Activated T-helper 1 cell treated with anti-CD3 and anti-CD28 coated beads, Interleukin-12 subunit alpha, Interleukin-12 subunit beta, Interleukin-2, Interleukin-4 antibody, amounts not matched to agents 30 ng/mL and 10 ng/mL and 1 ng/mL, durations not matched to agents 14 hours and 24 hours and 36 hours (primary cell): ENCODE measurements at regions of chr2 and their contacts with region 1.

Region 1: GRCh38 chr2:8544786-8545694 is 136.8 kb upstream of the ID2 start:
- DNase-seq: peak; percentile 83
- H3K4me3 Mint-ChIP-seq: peak overlapping the region; percentile 59
- H3K27ac Mint-ChIP-seq: peak overlapping the region; percentile 99
- H3K4me1 Mint-ChIP-seq: peaks cover 80% of the 10 kb centered on the region
- H3K27me3 Mint-ChIP-seq: no peaks in the 10 kb centered on the region

Region 2: GRCh38 chr2:7437716-7438632 is 1107.1 kb before region 1 on chr2:
- intact Hi-C with region 1: loop called (anchors 1 kb)
- DNase-seq: no peak
- H3K4me3 Mint-ChIP-seq: peak overlapping the region; percentile 54
- H3K27ac Mint-ChIP-seq: peak overlapping the region; percentile 88
- H3K4me1 Mint-ChIP-seq: peaks cover 86% of the 10 kb centered on the region
- H3K27me3 Mint-ChIP-seq: no peaks in the 10 kb centered on the region

Region 3: DNA sequence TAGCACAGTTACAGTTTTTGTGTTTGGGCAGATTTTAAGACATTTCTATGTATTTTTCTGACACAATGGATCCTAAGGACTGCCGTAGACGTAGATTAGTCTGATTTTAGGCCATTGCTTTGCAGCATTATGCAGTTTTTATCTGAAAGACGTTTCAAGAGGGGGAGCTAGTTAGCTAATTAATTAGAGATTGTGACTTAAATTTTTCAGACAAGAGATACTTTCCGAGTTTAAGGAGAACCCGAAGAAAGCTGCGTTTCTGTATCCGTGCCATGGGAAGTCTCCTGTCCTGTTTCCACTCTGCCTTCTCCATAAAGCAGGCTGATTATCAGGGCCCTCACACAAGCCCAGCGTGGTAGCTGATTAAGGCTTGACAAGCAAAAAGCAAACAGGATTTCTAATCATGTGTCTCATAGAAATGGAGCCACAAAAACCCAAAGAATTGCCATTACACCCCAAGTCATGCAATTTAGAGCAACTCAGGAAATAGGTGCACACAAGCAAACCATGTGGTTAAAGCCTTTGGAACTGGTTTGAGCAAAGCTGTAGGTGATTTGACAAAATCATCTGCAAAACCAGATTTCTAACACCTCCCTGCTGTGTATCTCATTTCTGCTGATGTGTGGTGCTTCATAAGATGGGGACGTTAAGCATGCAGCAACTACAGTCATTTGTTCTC is 819.7 kb before region 1 on chr2:
- intact Hi-C with region 1: loop called (anchors 1 kb)
- DNase-seq: peak; percentile 64
- H3K4me3 Mint-ChIP-seq: peak overlapping the region; percentile 87
- H3K27ac Mint-ChIP-seq: peak overlapping the region; percentile 95
- H3K4me1 Mint-ChIP-seq: peaks cover 73% of the 10 kb centered on the region
- H3K27me3 Mint-ChIP-seq: no peaks in the 10 kb centered on the region

Region 4: GRCh38 chr2:7984693-7985353 is 560.2 kb before region 1 on chr2:
- intact Hi-C with region 1: loop called (anchors 1 kb)
- DNase-seq: no peak
- H3K4me3 Mint-ChIP-seq: peak overlapping the region; percentile 12
- H3K27ac Mint-ChIP-seq: peak overlapping the region; percentile 82
- H3K4me1 Mint-ChIP-seq: peaks cover 28% of the 10 kb centered on the region
- H3K27me3 Mint-ChIP-seq: no peaks in the 10 kb centered on the region

Region 5: DNA sequence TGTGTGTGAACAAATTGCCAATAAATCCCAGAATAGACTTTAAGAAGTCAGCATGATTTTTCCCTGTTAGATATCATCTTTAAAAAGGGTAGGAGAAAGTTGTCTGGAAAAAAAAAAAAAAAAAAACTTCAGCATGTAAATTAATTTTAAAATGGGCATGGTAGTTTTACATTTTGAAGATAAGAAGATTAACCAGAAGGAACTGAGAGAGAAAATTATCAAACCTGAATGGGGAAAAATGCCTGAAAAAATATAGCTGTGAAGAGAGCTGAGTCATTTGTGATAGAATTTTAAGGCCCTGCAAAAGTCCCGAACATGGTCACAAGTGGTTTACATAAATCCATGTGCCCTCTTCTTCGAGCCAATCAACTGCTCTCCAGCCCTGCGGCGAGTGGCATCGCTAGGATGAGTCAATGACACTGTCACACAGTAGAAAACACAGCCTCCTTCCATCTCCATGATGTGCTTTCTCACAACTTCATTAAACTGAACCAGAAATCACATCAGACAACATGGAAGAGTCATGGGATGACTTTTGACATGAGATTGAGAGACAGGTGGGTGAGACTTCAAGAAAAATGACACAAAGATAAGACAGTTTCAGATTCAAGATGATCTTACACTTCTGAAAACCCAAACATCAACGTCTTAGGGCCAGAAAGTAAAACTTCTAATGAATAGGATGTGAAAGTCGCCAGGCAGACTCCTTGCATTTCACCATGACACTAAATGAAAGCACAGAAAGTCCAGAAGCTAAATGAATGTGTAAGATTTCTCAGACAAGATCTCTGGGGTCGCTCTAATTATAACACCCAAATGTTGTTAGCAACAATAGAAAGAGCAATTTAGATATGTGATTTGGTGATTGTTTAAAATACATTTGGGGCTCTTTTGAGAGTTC is 136.2 kb before region 1 on chr2:
- intact Hi-C with region 1: loop called (anchors 1 kb)
- DNase-seq: peak; percentile 49
- H3K4me3 Mint-ChIP-seq: peak overlapping the region; percentile 1
- H3K27ac Mint-ChIP-seq: peak overlapping the region; percentile 80
- H3K4me1 Mint-ChIP-seq: peaks cover 19% of the 10 kb centered on the region
- H3K27me3 Mint-ChIP-seq: peaks cover 15% of the 10 kb centered on the region

Region 6: GRCh38 chr2:8525582-8526402 is 19.2 kb before region 1 on chr2:
- intact Hi-C with region 1: loop called (anchors 1 kb)
- DNase-seq: no peak
- H3K4me3 Mint-ChIP-seq: no peak overlapping the region
- H3K27ac Mint-ChIP-seq: peak overlapping the region; percentile 32
- H3K4me1 Mint-ChIP-seq: peaks cover 55% of the 10 kb centered on the region
- H3K27me3 Mint-ChIP-seq: no peaks in the 10 kb centered on the region